Activated T-helper 1 cell treated with anti-CD3 and anti-CD28 coated beads, Interleukin-12 subunit alpha, Interleukin-12 subunit beta, Interleukin-2, Interleukin-4 antibody, amounts not matched to agents 30 ng/mL and 10 ng/mL and 1 ng/mL, durations not matched to agents 14 hours and 24 hours and 36 hours (primary cell): ENCODE measurements at regions of chr17 and their contacts with region 1.

Region 1: DNA sequence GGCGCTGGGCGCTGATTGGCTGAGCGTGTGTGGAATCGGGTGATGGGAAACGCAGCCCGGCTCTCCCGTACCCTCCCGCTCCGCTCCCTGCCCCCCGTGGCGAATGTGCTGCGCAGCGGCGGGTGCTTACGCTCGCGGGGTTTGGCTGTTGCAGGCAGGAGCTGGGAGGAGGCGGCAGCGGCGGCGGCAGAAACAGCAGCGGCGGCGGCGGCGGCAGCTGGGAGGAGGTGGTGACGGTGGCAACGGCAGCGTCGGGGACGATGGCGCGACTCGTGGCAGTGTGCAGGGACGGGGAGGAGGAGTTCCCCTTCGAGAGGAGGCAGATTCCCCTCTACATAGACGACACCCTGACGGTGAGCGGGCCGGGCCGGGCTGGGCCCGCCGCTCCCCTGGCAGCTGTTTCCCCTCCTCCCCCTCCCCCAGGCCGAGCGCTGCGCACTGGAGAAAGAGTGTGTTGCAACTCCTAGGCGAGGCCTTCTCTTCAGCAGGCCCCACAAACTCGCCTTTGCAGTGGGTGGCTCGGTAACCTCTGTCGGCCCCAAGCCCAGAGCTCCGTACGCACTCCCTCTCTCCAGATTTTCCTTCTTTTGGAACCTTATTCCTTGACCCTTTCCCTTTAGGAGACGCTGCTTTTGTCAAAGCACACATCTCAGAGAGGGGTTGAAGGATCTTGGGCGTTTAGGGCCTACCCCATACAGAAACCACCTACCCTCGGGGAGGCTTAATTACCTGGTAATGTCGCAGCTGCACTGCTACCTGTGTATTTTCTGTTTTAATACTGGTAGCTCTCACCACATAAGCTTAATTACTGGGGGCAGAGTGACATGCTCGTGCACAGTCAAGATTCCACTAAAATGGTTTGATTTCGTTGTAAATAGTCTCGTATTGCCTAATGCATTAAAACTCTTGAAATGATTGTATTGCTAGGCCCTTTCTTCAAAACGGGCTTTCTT is 1.0 kb downstream of the GGNBP2 start:
- DNase-seq: peak; percentile 95
- H3K4me3 Mint-ChIP-seq: peak overlapping the region; percentile 87
- H3K27ac Mint-ChIP-seq: peak overlapping the region; percentile 92
- H3K4me1 Mint-ChIP-seq: peaks cover 36% of the 10 kb centered on the region
- H3K27me3 Mint-ChIP-seq: no peaks in the 10 kb centered on the region

Region 2: DNA sequence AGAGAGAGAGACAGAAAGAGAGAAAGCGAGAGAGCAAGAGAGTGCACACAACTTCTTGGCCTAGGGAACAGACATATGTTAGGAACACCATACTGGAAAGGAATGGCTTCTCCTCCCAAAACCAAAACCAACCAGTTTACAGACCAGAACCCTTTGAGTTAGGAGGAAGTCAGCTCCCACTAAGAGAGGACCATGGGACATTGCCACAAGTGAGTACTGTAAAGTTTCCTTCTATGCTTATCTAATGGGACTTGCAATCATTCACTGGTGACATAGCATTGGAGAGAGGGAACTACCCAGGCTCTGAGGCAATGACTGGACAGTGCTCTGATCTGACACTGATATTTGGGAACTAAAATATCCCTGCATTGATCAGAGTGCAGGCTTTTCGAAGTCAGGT is 401.7 kb before region 1 on chr17:
- intact Hi-C with region 1: no loop called
- DNase-seq: no peak
- H3K4me3 Mint-ChIP-seq: no peak overlapping the region
- H3K27ac Mint-ChIP-seq: no peak overlapping the region
- H3K4me1 Mint-ChIP-seq: no peaks in the 10 kb centered on the region
- H3K27me3 Mint-ChIP-seq: peaks cover 6% of the 10 kb centered on the region

Region 3: DNA sequence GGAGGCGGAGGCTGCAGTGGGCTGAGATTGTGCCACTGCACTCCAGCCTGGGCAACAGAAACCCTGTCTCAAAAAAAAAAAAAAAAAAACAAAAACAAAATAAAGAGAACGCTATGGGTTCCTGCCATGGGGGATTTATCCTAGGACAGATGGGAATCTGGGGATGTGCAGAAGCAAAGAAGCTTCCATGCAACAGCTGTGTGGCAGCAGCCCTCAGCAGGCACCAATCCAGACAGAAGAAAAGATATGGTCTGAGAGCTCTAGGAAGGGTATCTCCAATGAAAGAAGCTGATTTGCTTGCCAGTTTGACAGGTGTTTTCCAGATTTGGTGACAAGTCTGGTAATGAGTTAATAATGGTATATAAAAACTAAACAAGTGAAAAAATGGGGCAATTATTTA is 22.6 kb before region 1 on chr17:
- intact Hi-C with region 1: no loop called
- DNase-seq: no peak
- H3K4me3 Mint-ChIP-seq: no peak overlapping the region
- H3K27ac Mint-ChIP-seq: no peak overlapping the region
- H3K4me1 Mint-ChIP-seq: peaks cover 34% of the 10 kb centered on the region
- H3K27me3 Mint-ChIP-seq: no peaks in the 10 kb centered on the region

Region 4: GRCh38 chr17:36534840-36535668 is 10.7 kb before region 1 on chr17 and contains the starts of genes MYO19 and PIGW:
- intact Hi-C with region 1: loop called (anchors 1 kb)
- DNase-seq: peak; percentile 86
- H3K4me3 Mint-ChIP-seq: peak within 1 kb of the TSS; percentile 98
- H3K27ac Mint-ChIP-seq: peak within 1 kb of the TSS; percentile 99
- H3K4me1 Mint-ChIP-seq: peaks cover 39% of the 10 kb centered on the region
- H3K27me3 Mint-ChIP-seq: no peaks in the 10 kb centered on the region
- total RNA-seq, gene MYO19: 159 and 165 TPM in 2 replicates
- total RNA-seq, gene PIGW: 29.4 and 30.8 TPM in 2 replicates

Region 5: GRCh38 chr17:36591434-36592315 is 45.9 kb after region 1 on chr17 and contains the start of gene DHRS11:
- intact Hi-C with region 1: loop called (anchors 2 kb)
- DNase-seq: peak; percentile 74
- H3K4me3 Mint-ChIP-seq: peak within 1 kb of the TSS; percentile 85
- H3K27ac Mint-ChIP-seq: peak within 1 kb of the TSS; percentile 65
- H3K4me1 Mint-ChIP-seq: peaks cover 28% of the 10 kb centered on the region
- H3K27me3 Mint-ChIP-seq: no peaks in the 10 kb centered on the region
- total RNA-seq, gene DHRS11: 15.9 and 16.4 TPM in 2 replicates

Region 6: GRCh38 chr17:36601303-36602029 is 55.7 kb after region 1 on chr17 and contains the start of gene MRM1:
- intact Hi-C with region 1: loop called (anchors 1 kb)
- DNase-seq: peak; percentile 85
- H3K4me3 Mint-ChIP-seq: peak within 1 kb of the TSS; percentile 91
- H3K27ac Mint-ChIP-seq: peak within 1 kb of the TSS; percentile 70
- H3K4me1 Mint-ChIP-seq: peaks cover 38% of the 10 kb centered on the region
- H3K27me3 Mint-ChIP-seq: no peaks in the 10 kb centered on the region
- total RNA-seq, gene MRM1: 21.0 and 22.7 TPM in 2 replicates

Region 7: GRCh38 chr17:36722121-36722902 is 176.6 kb after region 1 on chr17:
- intact Hi-C with region 1: loop called (anchors 5 kb)
- DNase-seq: peak; percentile 83
- H3K4me3 Mint-ChIP-seq: peak overlapping the region; percentile 79
- H3K27ac Mint-ChIP-seq: peak overlapping the region; percentile 95
- H3K4me1 Mint-ChIP-seq: peaks cover 56% of the 10 kb centered on the region
- H3K27me3 Mint-ChIP-seq: peaks cover 5% of the 10 kb centered on the region